Activated CD4-positive, alpha-beta memory T cell treated with anti-CD3 and anti-CD28 coated beads, Interleukin-2, amount 10 ng/mL, durations not matched to agents 7 days and 5 days (primary cell): ENCODE measurements at regions of chr18 and their contacts with region 1.

Region 1: GRCh38 chr18:23586249-23587196 is at the start of gene NPC1:
- DNase-seq: peak; percentile 94
- H3K4me3 Mint-ChIP-seq: peak within 1 kb of the TSS; percentile 92
- H3K27ac Mint-ChIP-seq: peak within 1 kb of the TSS; percentile 92
- H3K4me1 Mint-ChIP-seq: peaks cover 43% of the 10 kb centered on the region
- H3K27me3 Mint-ChIP-seq: peaks cover 1% of the 10 kb centered on the region
- total RNA-seq, gene NPC1: 39.8 to 44.8 TPM

Region 2: GRCh38 chr18:23503038-23503962 is 83.2 kb before region 1 on chr18 and contains the start of gene RMC1:
- CTCF ChIA-PET with region 1: interaction called, 15 read pairs
- POLR2A ChIA-PET with region 1: interaction called, 7 read pairs
- DNase-seq: peak; percentile 97
- H3K4me3 Mint-ChIP-seq: peak within 1 kb of the TSS; percentile 86
- H3K27ac Mint-ChIP-seq: peak within 1 kb of the TSS; percentile 79
- H3K4me1 Mint-ChIP-seq: peaks cover 46% of the 10 kb centered on the region
- H3K27me3 Mint-ChIP-seq: no peaks in the 10 kb centered on the region
- total RNA-seq, gene RMC1: 54.9 to 55.9 TPM

Region 3: DNA sequence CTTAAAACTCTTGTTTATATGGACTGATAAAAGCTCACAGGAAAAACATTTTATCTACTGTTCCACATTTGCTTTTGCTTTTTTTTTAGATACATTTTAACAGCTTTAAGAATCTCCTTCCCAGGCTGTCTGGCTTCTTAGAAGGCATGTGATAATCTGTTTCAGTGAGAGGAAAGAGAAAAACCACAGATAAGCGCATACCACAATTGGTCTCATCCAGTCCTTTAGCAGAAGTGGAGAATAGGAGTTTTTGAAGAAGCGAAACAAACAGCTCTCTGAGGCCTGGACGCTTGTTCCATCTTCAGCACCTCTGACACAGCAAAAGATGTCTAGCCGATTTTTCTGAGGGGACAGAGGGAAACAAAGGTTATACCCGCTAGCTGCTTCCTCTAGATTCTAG is 45.7 kb before region 1 on chr18:
- CTCF ChIA-PET with region 1: interaction called, 6 read pairs
- POLR2A ChIA-PET with region 1: interaction called, 24 read pairs
- DNase-seq: peak; percentile 40
- H3K4me3 Mint-ChIP-seq: peak overlapping the region; percentile 2
- H3K27ac Mint-ChIP-seq: peak overlapping the region; percentile 70
- H3K4me1 Mint-ChIP-seq: peaks cover 40% of the 10 kb centered on the region
- H3K27me3 Mint-ChIP-seq: no peaks in the 10 kb centered on the region

Region 4: DNA sequence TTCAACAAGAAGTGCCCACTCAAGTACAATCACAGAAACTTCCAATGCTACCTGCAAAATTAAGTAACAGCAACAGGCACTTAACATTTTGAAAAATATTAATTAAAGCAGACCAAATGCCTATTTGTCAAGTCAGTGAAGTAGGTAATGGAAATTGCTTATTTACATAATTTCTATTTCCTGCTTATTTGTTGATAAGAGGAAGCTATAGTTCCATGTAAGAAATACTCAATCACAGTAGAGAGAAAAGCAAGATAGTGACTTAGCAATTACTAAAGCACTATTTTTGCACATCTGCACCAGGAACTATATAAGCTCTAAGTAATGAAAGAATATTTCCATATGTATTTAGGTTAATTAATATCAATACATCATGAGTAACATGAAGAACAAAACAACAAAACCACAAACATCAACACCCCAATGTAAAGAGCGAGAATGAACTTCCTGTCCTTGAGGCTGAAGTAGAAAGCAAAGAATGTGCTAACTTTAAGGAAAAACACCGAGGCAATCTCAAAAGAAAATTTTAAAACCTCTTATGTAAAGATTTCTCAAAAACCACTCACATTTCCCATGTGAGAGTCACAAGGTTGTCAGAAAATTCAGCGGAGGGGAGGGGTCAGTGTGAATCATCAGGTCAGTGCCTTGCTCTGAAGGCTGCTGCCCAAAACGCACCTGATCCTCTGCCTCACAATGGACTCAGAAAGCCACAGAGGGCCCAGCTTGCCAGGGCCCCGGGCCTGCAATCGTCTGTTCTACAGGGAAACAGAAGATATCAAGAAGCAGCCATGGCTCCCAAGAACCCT is 12.7 kb before region 1 on chr18:
- CTCF ChIA-PET with region 1: interaction called, 13 read pairs
- POLR2A ChIA-PET with region 1: interaction called, 25 read pairs
- DNase-seq: peak; percentile 54
- H3K4me3 Mint-ChIP-seq: peak overlapping the region; percentile 25
- H3K27ac Mint-ChIP-seq: peak overlapping the region; percentile 88
- H3K4me1 Mint-ChIP-seq: peaks cover 47% of the 10 kb centered on the region
- H3K27me3 Mint-ChIP-seq: no peaks in the 10 kb centered on the region

Region 5: DNA sequence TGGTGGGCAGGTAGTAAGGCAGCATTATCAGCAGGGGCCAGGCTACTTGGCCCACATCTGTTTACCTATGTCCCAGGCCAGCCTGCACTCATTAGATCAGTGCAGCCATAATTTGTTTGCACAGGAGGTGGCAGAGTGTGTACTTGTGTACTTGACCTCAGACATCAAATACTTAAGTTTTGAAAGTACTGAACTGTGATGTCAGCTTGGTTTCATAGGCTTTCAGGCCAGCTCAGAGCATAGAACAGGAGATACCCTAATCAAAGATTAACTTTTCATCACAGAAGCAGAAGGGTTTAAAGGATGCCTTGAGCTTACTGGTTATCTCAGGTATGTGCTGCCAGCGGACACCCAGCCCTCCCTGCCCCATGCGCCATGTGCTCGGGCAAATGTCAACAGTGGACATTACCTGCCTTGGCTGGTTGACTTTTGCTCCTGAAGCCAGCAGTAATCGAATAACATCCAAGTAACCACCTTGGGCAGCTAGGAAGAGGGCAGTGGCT is 43.0 kb after region 1 on chr18:
- CTCF ChIA-PET with region 1: no interaction called
- POLR2A ChIA-PET with region 1: no interaction called
- DNase-seq: no peak
- H3K4me3 Mint-ChIP-seq: no peak overlapping the region
- H3K27ac Mint-ChIP-seq: no peak overlapping the region
- H3K4me1 Mint-ChIP-seq: peaks cover 20% of the 10 kb centered on the region
- H3K27me3 Mint-ChIP-seq: peaks cover 14% of the 10 kb centered on the region